ENCODE measurements at regions of chr3 and their contacts with region 1.

Region 1: GRCh38 chr3:58630076-58630709 is 36.4 kb downstream of the FAM3D start:
- DNase-seq: peak; percentile 81
- H3K4me3 Mint-ChIP-seq: no peak overlapping the region
- H3K27ac Mint-ChIP-seq: no peak overlapping the region
- H3K4me1 Mint-ChIP-seq: no peaks in the 10 kb centered on the region
- H3K27me3 Mint-ChIP-seq: no peaks in the 10 kb centered on the region

Region 2: DNA sequence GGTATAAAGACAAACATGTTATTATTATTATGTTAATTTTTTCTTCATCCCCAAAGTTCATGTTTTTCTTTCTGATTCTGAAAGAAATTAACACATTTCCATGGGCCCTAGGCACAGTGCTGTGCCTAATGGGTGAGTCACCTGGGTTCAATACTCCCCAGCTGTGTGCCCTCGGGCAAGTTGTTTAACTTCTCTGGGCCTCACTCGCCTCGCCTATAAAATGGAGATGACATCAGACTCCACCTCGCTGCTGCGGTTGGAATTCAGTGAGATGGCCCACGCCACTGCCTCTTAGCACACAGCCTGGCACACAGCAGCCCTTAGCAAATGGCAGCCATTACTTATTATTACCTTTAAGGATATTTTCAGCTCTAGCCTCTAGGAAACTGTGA is 442.0 kb before region 1 on chr3:
- CTCF ChIA-PET with region 1: no interaction called
- intact Hi-C with region 1: loop called (anchors 1 kb)
- DNase-seq: no peak
- H3K4me3 Mint-ChIP-seq: no peak overlapping the region
- H3K27ac Mint-ChIP-seq: no peak overlapping the region
- H3K4me1 Mint-ChIP-seq: no peaks in the 10 kb centered on the region
- H3K27me3 Mint-ChIP-seq: no peaks in the 10 kb centered on the region

Region 3: DNA sequence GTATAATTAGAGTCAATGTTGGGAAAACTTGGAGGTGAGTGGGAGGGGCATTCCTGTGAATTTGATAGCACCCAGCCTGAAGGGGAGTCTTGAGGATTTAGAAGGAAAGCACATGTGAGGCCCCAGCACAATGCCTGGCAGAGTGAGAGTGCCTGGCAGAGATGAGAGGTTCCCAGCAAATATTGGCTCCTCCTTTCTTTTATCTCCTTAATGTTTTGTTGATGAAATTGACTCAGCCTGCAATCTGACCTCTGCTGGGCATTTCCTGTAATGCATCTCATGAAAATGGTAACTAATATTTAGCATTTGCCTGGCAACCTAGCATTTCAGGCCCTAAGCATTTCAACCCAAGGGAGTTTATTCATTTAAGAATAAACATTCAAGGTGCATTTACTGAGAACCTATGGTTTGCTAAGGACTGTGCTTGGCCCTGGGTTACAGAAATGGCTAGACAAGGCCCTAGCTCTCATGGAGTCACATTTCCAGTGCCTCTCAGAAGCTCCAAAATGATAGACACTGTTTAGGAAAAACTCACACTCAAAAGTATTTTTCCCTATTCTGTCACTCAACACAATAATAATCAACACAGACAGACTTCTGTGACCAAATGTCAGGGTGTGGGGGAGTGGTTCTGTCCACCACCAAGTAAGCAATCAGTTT is 215.5 kb before region 1 on chr3:
- CTCF ChIA-PET with region 1: no interaction called
- intact Hi-C with region 1: loop called (anchors 1 kb)
- DNase-seq: peak; percentile 68
- H3K4me3 Mint-ChIP-seq: no peak overlapping the region
- H3K27ac Mint-ChIP-seq: no peak overlapping the region
- H3K4me1 Mint-ChIP-seq: peaks cover 6% of the 10 kb centered on the region
- H3K27me3 Mint-ChIP-seq: no peaks in the 10 kb centered on the region

Region 4: GRCh38 chr3:58568572-58569286 is 61.5 kb before region 1 on chr3:
- CTCF ChIA-PET with region 1: interaction called, 256 read pairs
- intact Hi-C with region 1: loop called (anchors 1 kb)
- DNase-seq: peak; percentile 89
- H3K4me3 Mint-ChIP-seq: no peak overlapping the region
- H3K27ac Mint-ChIP-seq: no peak overlapping the region
- H3K4me1 Mint-ChIP-seq: peaks cover 4% of the 10 kb centered on the region
- H3K27me3 Mint-ChIP-seq: no peaks in the 10 kb centered on the region

Region 5: GRCh38 chr3:58617338-58617761 is 12.8 kb before region 1 on chr3:
- CTCF ChIA-PET with region 1: interaction called, 16 read pairs
- intact Hi-C with region 1: no loop called
- DNase-seq: no peak
- H3K4me3 Mint-ChIP-seq: no peak overlapping the region
- H3K27ac Mint-ChIP-seq: no peak overlapping the region
- H3K4me1 Mint-ChIP-seq: no peaks in the 10 kb centered on the region
- H3K27me3 Mint-ChIP-seq: no peaks in the 10 kb centered on the region